Panc1 (cell line): ENCODE measurements at regions of chr3 and their contacts with region 1.

Region 1: DNA sequence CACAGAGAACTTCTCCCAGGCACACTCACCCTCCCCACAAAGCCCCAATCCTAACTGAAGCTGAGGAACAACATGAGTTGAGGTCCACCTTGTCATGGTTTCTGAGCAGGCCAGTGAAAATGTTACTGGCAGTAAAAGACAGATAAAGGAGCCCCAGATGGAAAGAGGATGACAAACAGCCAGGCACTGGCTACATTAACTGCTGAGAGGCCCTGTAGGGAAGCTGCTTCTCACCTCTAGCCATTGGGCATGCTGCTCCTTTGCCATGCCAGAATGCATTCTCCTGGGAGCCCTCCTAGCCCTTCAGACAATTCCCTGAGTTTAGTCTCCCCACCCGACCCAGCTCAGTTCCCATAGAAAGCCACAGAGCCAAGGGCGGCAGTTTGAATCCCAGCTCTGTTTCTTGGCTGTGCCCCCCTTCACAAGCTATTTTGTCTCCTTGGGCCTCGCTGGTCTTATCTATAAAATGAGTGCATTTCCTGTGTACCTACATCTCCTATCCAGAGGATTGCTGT is 60.5 kb downstream of the LMCD1 start:
- DNase-seq: no peak
- ATAC-seq: no peak
- H3K4me3 ChIP-seq: no peak overlapping the region
- H3K27ac ChIP-seq: no peak overlapping the region
- H3K4me1 ChIP-seq: no peaks in the 10 kb centered on the region
- H3K27me3 ChIP-seq: no peaks in the 10 kb centered on the region
- CTCF ChIP-seq: no peak

Region 2: DNA sequence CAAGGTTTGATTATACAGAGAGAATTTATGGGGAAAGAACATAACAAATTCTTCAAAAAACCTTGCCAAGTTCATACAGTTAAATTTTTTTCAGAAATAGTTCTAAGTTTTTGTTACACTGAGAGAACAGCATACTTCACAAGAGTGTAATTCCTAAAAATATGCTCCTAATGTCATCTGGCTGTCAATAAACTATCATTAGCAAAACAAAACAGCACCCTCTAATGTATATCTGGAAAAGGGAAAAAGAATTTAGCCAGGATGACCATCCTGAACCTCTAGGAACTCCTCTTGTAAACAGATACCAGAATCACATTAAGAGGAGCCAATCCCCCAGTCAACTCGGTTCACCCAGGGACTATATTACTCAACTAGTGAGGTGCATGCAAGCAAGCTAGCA is 337.8 kb after region 1 on chr3:
- CTCF ChIA-PET with region 1: no interaction called
- POLR2A ChIA-PET with region 1: interaction called, 10 read pairs
- in situ Hi-C with region 1: no loop called
- intact Hi-C with region 1: no loop called
- DNase-seq: no peak
- ATAC-seq: no peak
- H3K4me3 ChIP-seq: no peak overlapping the region
- H3K27ac ChIP-seq: no peak overlapping the region
- H3K4me1 ChIP-seq: no peaks in the 10 kb centered on the region
- H3K27me3 ChIP-seq: no peaks in the 10 kb centered on the region
- CTCF ChIP-seq: no peak; the same call in 1 of the 2 replicates